GM10248 (cell line): ENCODE measurements at regions of chr6 and their contacts with region 1.

Region 1: GRCh38 chr6:166402582-166403277 is 20.0 kb upstream of the MPC1 start:
- DNase-seq: no peak
- CTCF ChIP-seq: no peak

Region 2: DNA sequence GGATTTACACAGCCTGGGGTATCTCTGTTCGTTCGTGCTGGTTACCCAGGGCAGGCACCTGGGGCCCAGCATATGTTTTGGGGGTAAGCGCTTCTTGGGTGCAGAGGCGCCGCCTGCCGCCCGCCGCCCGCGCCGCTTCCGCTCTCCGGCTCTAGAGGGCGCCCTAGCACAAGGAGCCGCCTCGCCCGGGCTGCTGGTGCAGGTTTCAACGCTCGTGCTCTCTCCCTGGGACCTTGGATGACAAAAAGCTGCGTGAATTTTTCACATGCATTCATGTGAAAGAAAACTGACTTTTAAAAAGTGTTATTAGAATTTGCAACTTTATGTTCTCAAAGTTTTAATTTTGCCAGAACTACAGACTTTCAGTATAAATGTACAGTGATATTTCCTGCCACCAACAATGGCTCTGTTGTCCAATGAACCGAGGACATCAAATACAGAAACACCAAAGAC is 127.0 kb before region 1 on chr6:
- CTCF ChIA-PET with region 1: interaction called, 109 read pairs
- POLR2A ChIA-PET with region 1: no interaction called
- DNase-seq: peak; percentile 88
- CTCF ChIP-seq: peak; percentile 100

Region 3: GRCh38 chr6:166286839-166287271 is 115.9 kb before region 1 on chr6:
- CTCF ChIA-PET with region 1: interaction called, 95 read pairs
- POLR2A ChIA-PET with region 1: no interaction called
- DNase-seq: peak; percentile 51
- CTCF ChIP-seq: no peak

Region 4: DNA sequence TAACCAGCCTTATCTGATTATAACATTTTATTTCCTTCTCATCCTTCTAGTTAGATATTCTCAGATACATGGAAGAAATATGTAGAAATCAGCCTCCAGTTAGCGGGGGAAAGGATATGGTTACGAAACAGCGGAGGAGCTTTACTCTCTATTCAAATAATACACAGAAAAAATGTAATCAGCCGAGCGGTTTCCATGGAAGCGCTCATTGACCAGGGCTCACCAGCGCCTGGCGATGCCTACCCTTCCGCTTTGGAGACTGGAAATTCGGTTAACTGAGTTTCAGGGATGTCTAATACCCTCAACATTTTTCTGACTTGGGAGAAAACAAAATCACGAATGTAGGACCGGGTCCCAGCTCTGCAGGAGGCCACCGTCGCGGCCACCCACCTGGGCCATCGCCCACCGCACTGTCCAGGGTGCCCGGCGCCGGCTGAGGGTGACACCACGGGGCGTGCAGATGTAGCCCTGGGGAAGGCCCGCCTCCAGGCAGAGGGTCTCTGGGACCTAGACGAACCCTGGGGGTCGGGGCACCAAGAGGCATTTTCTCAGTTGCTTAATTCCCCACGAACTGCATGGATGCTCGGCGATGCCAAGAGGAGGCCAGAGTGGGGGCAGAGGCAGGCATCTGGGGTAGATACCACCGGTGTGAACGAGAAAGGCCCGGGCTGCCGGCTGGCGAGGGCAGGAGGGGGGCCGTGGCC is 96.2 kb before region 1 on chr6:
- CTCF ChIA-PET with region 1: interaction called, 113 read pairs
- POLR2A ChIA-PET with region 1: no interaction called
- DNase-seq: no peak
- CTCF ChIP-seq: no peak

Region 5: DNA sequence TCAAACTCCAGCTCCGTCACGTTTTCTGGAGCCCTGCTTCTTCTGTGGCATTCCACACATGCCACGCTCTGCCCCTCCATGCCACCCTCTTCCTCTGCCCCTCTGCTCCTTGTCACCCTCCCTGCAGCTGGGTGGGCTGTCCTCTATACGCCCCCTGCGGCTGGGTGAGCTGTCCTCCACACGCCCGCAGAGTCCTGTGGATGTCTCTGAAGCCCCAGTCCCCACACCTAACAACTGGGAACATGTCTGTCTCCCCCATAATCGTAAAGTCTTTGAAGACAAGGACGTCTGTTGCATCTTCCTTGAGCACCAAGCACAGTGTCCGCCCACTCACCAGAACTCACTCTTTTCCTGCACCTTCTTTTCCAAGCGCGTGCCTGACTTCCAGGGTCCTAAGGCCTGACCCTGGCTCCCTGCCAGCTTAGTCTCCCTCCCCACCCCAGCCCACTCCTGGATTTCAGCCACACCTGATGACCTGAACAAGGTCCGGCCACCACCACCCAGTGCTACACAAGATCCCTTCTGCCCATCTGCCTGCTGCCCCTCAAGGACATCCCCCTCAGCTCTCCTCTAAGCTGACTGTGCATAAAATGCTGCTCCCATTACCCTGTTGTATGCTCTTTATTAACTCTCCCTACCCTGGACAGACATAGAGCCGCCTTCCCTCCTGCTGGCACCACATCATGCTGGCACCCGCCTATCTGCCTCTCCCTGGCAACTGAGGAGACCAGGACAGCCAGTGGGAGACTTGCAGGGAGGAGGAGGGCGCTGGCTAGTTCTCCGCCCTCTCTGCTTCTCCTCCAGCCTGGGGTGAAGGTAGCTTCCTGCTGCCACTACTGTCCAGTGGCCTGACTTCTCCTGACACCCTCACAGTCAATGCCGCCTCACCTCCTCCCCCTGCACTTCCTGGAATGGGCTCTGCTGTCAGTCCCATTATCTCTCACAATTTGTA is 83.8 kb before region 1 on chr6:
- CTCF ChIA-PET with region 1: interaction called, 113 read pairs
- POLR2A ChIA-PET with region 1: no interaction called
- DNase-seq: no peak
- CTCF ChIP-seq: no peak